GM13976 (cell line): ENCODE measurements at regions of chr2 and their contacts with region 1.

Region 1: DNA sequence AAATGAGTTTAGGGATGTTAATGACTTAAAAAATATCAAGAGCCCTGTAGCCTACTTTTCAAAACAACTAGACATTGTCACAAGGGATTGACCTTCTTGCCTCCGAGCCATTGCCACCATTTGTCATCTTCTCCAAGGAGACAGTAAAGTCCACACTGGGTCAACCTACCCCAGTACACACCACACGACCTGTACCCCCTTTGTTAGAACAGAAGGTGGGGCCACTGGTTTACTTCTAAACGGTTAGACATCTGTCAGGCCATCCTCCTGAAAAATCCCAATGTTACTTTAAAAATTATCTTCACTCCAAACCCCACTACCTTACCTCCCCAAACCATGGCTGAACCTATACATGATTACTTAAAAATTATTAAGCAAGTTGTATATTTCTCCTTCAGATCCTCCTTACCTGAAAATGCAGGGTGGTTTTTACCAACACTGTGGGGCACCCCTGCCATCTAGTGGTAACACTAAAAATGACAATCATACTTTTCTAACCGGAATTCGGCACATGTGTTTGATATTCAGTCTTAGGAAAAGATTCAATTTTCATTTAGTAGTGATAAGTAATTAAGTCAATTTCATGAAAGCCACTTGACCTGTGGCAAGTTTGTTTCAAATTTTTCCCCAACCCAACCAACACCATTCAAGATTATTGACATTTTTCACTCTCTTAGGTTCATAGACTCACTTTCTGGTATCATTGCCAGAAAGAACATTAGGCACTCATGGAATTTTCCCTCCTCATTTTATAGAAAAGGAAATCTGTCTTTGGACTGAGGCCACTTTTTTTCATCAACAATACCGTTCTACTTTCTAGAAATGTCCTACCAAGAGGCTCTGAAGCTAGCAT is 265.3 kb upstream of the PKDCC start:
- DNase-seq: peak; percentile 34
- CTCF ChIP-seq: peak; percentile 42

Region 2: DNA sequence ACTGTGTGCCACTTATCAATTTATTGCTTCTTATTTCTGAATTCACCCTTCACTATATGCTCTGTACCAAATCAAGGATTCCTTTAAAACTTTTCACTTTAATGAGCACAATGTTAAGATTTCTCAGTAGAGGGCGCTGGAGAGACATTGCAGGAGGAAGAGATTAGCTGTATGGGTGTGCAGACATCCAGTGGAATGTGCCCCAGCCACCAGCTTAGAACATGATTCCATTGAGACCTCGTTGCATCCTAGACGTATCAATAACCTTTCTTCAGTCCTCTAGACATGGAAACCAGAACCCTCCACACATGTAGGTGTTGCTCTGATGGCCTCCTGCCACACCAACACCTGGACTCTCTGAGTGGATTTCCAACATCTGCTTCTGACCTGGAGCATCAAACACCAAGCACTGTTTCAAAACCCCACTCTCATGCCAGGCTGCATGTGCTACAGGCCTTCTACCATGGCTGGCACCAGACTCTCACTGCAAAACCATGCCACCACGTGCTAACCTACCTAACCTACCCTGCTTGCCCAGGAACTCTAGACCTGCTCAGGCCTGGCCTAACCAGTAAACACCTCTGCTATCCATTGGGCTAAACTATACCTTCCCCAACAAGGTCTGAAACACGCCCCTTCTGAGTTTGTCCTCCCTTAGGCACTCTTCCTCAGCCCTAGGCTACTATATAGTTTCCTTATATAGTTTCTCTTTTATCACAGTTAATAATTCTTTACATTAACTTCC is 367.9 kb before region 1 on chr2:
- in situ Hi-C with region 1: loop called (anchors 25 kb)
- DNase-seq: peak; percentile 16
- CTCF ChIP-seq: peak; percentile 55

Region 3: DNA sequence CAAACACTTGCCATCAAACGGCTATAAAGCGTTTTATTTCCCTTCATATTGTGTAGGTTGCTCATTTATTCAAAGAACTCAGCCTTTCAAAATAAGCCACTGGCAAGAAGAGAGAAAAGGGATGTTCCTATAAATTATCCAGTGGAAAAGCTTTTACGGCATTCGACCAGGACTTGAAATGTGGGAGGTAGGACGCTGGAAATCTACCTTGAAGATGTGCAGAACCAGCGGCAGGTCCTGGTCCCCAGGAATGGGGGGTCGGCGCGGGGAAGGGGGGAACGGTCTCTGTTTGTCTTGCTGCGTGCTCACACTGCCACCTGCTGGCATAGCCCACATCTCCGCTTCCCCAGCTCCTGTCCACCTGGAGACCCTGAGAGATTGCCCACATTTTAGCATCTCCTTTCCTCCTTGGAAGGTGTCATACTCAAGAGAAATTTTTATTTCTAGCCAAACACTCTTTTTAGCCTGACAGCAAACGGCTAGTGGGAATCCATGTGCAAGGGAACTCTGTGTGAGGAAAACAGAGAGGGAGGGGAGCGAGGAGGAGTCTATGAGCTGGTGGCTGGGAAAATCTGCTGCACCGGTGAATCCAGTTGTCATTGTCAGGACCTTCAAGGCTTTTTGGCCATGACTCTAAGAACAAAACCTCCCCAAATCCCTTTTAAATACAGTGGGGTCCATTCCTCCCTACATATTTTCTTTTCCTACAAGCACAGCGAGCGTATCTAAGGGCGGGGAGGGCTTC is 83.7 kb before region 1 on chr2:
- in situ Hi-C with region 1: loop called (anchors 25 kb)
- DNase-seq: peak; percentile 43
- CTCF ChIP-seq: peak; percentile 58

Region 4: GRCh38 chr2:42296226-42296625 is 513.7 kb after region 1 on chr2:
- in situ Hi-C with region 1: no loop called
- DNase-seq: peak; percentile 38
- CTCF ChIP-seq: no peak